ENCODE measurements at regions of chr11 and their contacts with region 1.

Region 1: GRCh38 chr11:9384535-9385303 is at the start of gene IPO7:
- DNase-seq: peak; percentile 68 to 88 (median 84)
- ATAC-seq: peak; percentile 99
- H3K4me3 ChIP-seq: peak within 1 kb of the TSS; percentile 78
- H3K4me3 Mint-ChIP-seq: peak within 1 kb of the TSS; percentile 89 to 98 (median 94)
- H3K27ac ChIP-seq: peak within 1 kb of the TSS; percentile 88
- H3K27ac Mint-ChIP-seq: peak within 1 kb of the TSS; percentile 79 to 94 (median 91)
- H3K4me1 ChIP-seq: peaks cover 11 to 15% of the 10 kb centered on the region in 2 donors
- H3K4me1 Mint-ChIP-seq: peaks cover 25 to 51% (median 38%) of the 10 kb centered on the region in 7 donors
- H3K27me3 ChIP-seq: no peaks in the 10 kb centered on the region
- H3K27me3 Mint-ChIP-seq: no peaks in the 10 kb centered on the region
- total RNA-seq, gene IPO7: 47.3 to 105 (median 61.3) TPM

Region 2: GRCh38 chr11:8682303-8683114 is 702.2 kb before region 1 on chr11 and contains the starts of genes RPL27A and TRIM66:
- CTCF ChIA-PET with region 1: no interaction called
- POLR2A ChIA-PET with region 1: no interaction called
- intact Hi-C with region 1: loop called (anchors 1 kb)
- DNase-seq: peak; percentile 97 to 100 (median 99)
- ATAC-seq: peak; percentile 98
- H3K4me3 ChIP-seq: peak within 1 kb of the TSS; percentile 73
- H3K4me3 Mint-ChIP-seq: peak within 1 kb of the TSS; percentile 89 to 97 (median 96)
- H3K27ac ChIP-seq: peak within 1 kb of the TSS; percentile 99
- H3K27ac Mint-ChIP-seq: peak within 1 kb of the TSS; percentile 97 to 99 (median 98)
- H3K4me1 ChIP-seq: peaks cover 17% of the 10 kb centered on the region in 2 donors
- H3K4me1 Mint-ChIP-seq: peaks cover 30 to 57% (median 43%) of the 10 kb centered on the region in 7 donors
- H3K27me3 ChIP-seq: no peaks in the 10 kb centered on the region
- H3K27me3 Mint-ChIP-seq: no peaks in the 10 kb centered on the region
- total RNA-seq, gene RPL27A: 758 to 2,116 (median 1,670) TPM
- total RNA-seq, gene TRIM66: 16.0 to 37.6 (median 24.2) TPM

Region 3: DNA sequence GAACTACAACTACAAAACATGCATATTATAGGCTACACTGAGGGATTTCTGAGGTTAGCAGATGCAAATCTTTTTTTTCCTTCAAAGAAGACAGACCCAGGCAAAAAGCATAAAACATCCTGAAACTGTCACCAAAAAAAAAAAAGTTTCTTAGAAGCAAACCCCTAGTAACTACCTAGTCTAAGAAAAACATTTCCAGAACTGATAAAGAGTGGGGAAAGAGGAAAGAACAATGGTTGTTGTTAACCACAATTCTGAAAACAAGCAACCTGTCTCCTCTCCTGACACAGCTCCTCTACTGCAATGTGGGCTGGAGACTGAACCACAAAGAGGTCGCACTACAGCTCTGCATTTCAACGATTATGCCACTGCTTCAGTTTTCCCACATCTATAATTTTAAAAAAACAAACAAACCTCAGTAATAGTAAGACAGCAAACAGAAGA is 134.6 kb before region 1 on chr11:
- CTCF ChIA-PET with region 1: no interaction called
- POLR2A ChIA-PET with region 1: interaction called, 5 read pairs
- intact Hi-C with region 1: loop called in 1 of 2 experiments (anchors 5 kb)
- DNase-seq: peak in 8 of 9 donors; percentile 40 to 83 (median 70)
- ATAC-seq: peak; percentile 92
- H3K4me3 ChIP-seq: peak overlapping the region; percentile 29
- H3K4me3 Mint-ChIP-seq: peak overlapping the region; percentile 62 to 84 (median 75)
- H3K27ac ChIP-seq: peak overlapping the region; percentile 62
- H3K27ac Mint-ChIP-seq: peak overlapping the region; percentile 67 to 94 (median 83)
- H3K4me1 ChIP-seq: peaks cover 14 to 72% of the 10 kb centered on the region in 2 donors
- H3K4me1 Mint-ChIP-seq: peaks cover 44 to 91% (median 69%) of the 10 kb centered on the region in 7 donors
- H3K27me3 ChIP-seq: no peaks in the 10 kb centered on the region
- H3K27me3 Mint-ChIP-seq: no peaks in the 10 kb centered on the region

Region 4: DNA sequence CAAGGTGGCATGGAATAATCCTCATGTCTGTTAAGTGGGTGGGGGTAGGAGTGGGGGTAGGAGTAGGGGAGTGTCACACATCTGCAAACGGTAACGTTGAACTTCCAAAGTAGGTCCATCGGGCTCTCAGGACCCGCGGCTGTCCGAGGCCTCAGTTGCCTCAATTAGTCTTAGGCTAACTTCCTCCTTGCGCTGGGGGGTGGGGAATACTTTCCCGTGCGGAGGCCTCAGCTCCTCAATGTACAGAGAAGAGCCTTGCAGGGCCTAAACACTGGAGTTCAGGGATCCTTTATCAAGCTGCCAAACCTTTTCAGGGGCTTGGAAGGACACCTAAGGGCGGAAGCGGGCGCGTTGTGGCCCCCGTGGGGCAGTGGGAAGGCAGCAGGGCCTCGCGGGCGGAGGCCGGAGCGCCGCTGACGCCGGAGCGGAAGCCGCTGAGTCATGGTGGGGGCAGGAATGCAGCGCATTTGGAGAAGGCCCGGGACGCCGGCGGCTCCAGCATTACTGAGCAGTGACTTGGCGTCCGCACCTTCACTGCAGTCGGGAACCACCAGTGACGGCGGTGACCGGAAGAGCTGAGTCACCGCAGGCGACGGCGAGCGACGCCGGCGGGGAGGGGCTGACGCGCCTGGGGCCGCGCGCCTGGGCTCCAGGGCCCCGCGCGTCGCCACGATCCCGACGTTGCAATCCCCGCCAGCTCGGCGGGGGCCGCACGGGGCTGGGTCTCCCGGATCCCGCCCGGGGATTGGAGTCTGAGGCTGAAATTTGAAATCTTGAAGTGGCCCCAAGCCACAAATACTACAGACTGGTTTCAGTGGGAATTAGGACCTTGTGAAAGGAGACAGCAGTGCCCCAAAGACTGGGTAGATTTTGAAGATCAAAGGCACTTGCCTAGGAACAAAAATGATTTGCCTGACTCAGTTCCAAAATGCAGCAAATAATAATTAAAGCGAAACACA is 20.5 kb before region 1 on chr11:
- CTCF ChIA-PET with region 1: interaction called, 3 read pairs
- POLR2A ChIA-PET with region 1: interaction called, 3 read pairs
- intact Hi-C with region 1: loop called (anchors 1 kb)
- DNase-seq: peak; percentile 38 to 82 (median 66)
- ATAC-seq: peak; percentile 95
- H3K4me3 ChIP-seq: peak overlapping the region; percentile 85
- H3K4me3 Mint-ChIP-seq: peak overlapping the region; percentile 78 to 89 (median 84)
- H3K27ac ChIP-seq: peak overlapping the region; percentile 73
- H3K27ac Mint-ChIP-seq: peak overlapping the region; percentile 78 to 94 (median 90)
- H3K4me1 ChIP-seq: peaks cover 2 to 5% of the 10 kb centered on the region in 2 donors
- H3K4me1 Mint-ChIP-seq: peaks cover 0 to 30% (median 14%) of the 10 kb centered on the region in 7 donors
- H3K27me3 ChIP-seq: no peaks in the 10 kb centered on the region
- H3K27me3 Mint-ChIP-seq: no peaks in the 10 kb centered on the region

Region 5: DNA sequence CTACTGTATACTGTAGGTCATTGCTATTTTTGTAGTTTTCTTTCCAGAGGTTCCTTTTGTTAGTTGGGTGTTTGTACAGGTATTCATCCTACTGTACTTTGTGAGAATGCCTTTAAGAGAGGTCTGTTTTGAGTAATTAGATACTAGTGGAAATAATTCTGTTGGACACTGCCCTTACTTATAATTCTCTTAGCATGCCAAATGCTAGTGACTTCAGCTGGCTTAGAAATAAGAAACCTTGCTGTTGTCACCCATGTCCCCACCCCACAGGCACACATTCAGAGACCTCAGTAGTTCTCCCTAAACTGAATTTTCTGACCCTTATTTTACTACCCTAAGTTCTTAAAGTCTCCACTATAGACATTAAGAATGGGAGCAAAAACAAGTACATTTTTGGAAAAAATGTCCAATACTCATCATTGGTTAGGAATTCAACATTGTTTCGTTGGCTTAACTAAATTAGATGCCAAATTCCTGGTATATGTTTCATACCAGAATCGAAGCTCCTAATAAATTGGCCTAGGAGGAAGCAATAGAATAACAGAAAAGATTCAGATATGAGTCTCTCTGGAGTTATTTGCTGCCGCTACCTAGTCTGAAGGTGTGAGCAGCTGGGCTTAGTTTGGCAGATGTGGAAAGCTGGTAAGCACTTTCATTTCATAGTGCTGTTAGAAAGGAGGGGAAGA is 104.5 kb after region 1 on chr11:
- CTCF ChIA-PET with region 1: no interaction called
- POLR2A ChIA-PET with region 1: no interaction called
- intact Hi-C with region 1: no loop called
- DNase-seq: no peak
- ATAC-seq: no peak
- H3K4me3 ChIP-seq: no peak overlapping the region
- H3K4me3 Mint-ChIP-seq: no peak overlapping the region
- H3K27ac ChIP-seq: no peak overlapping the region
- H3K27ac Mint-ChIP-seq: peak overlapping the region in 5 of 9 donors; percentile 30 to 77 (median 64)
- H3K4me1 ChIP-seq: no peaks in the 10 kb centered on the region
- H3K4me1 Mint-ChIP-seq: peaks cover 0 to 6% (median 0%) of the 10 kb centered on the region in 7 donors
- H3K27me3 ChIP-seq: no peaks in the 10 kb centered on the region
- H3K27me3 Mint-ChIP-seq: no peaks in the 10 kb centered on the region

Region 6: DNA sequence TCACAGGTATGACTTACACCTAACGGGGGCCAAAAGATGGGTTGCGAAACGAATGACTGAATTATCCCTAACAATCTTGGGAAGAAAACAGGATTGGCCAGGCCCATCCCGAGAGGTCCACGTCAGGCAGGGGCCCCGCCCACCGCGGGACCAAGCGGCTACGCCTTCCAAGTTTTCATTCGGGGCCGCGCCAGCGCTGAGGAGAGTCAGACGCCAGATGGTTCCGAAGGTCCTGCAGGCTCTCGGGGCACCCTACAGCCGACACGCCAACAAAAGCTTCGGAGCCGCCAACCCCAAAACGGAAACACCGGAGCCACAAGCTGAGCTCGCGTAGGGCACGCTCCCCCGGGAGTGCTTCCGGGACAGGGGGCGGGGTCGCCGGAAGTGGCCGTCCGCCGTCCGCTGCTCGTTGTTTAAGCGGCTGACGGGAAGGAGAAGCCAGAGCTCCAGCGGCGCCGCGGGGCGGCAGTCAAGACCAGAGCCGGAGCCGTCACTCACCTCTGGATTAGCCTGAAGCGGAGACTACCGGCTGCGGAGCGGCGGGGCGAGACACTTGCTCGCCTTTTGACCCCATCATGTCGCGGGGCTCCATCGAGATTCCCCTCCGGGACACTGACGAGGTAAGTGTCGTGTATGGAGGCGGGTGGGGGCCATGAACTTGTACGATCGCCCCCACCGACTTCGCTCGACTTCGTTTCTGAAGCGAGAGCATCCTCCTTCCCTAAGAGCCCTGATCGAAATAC is 1366.3 kb after region 1 on chr11 and contains the start of gene CTR9:
- CTCF ChIA-PET with region 1: no interaction called
- POLR2A ChIA-PET with region 1: no interaction called
- intact Hi-C with region 1: loop called in 1 of 2 experiments (anchors 5 kb)
- DNase-seq: peak; percentile 78 to 94 (median 88)
- ATAC-seq: peak; percentile 96
- H3K4me3 ChIP-seq: peak within 1 kb of the TSS; percentile 79
- H3K4me3 Mint-ChIP-seq: peak within 1 kb of the TSS; percentile 95 to 99 (median 97)
- H3K27ac ChIP-seq: peak within 1 kb of the TSS; percentile 85
- H3K27ac Mint-ChIP-seq: peak within 1 kb of the TSS; percentile 90 to 96 (median 91)
- H3K4me1 ChIP-seq: peaks cover 7 to 8% of the 10 kb centered on the region in 2 donors
- H3K4me1 Mint-ChIP-seq: peaks cover 12 to 36% (median 31%) of the 10 kb centered on the region in 7 donors
- H3K27me3 ChIP-seq: no peaks in the 10 kb centered on the region
- H3K27me3 Mint-ChIP-seq: no peaks in the 10 kb centered on the region
- total RNA-seq, gene CTR9: 23.8 to 64.0 (median 47.8) TPM